T-cell (primary cell): ENCODE measurements at regions of chr4 and their contacts with region 1.

Region 1: GRCh38 chr4:47499700-47500099 is 14.6 kb downstream of the ATP10D start:
- DNase-seq: no peak
- ATAC-seq: no peak
- H3K4me3 ChIP-seq: no peak overlapping the region
- H3K4me3 Mint-ChIP-seq: no peak overlapping the region
- H3K27ac ChIP-seq: no peak overlapping the region
- H3K27ac Mint-ChIP-seq: no peak overlapping the region
- H3K4me1 ChIP-seq: no peaks in the 10 kb centered on the region
- H3K4me1 Mint-ChIP-seq: peaks cover 0 to 5% (median 4%) of the 10 kb centered on the region in 3 donors
- H3K27me3 ChIP-seq: no peaks in the 10 kb centered on the region
- H3K27me3 Mint-ChIP-seq: no peaks in the 10 kb centered on the region

Region 2: GRCh38 chr4:47427935-47428334 is 71.8 kb before region 1 on chr4:
- CTCF ChIA-PET with region 1: no interaction called
- POLR2A ChIA-PET with region 1: interaction called in 1 of 2 experiments, 14 read pairs
- DNase-seq: no peak
- ATAC-seq: no peak
- H3K4me3 ChIP-seq: no peak overlapping the region
- H3K4me3 Mint-ChIP-seq: no peak overlapping the region
- H3K27ac ChIP-seq: no peak overlapping the region
- H3K27ac Mint-ChIP-seq: no peak overlapping the region
- H3K4me1 ChIP-seq: no peaks in the 10 kb centered on the region
- H3K4me1 Mint-ChIP-seq: no peaks in the 10 kb centered on the region
- H3K27me3 ChIP-seq: no peaks in the 10 kb centered on the region
- H3K27me3 Mint-ChIP-seq: peaks cover 4 to 9% of the 10 kb centered on the region in 2 donors

Region 3: GRCh38 chr4:47525154-47525819 is 25.6 kb after region 1 on chr4:
- CTCF ChIA-PET with region 1: no interaction called
- POLR2A ChIA-PET with region 1: no interaction called
- DNase-seq: no peak
- ATAC-seq: no peak
- H3K4me3 ChIP-seq: no peak overlapping the region
- H3K4me3 Mint-ChIP-seq: no peak overlapping the region
- H3K27ac ChIP-seq: no peak overlapping the region
- H3K27ac Mint-ChIP-seq: no peak overlapping the region
- H3K4me1 ChIP-seq: no peaks in the 10 kb centered on the region
- H3K4me1 Mint-ChIP-seq: peaks cover 4 to 7% (median 4%) of the 10 kb centered on the region in 3 donors
- H3K27me3 ChIP-seq: no peaks in the 10 kb centered on the region
- H3K27me3 Mint-ChIP-seq: no peaks in the 10 kb centered on the region